Activated B cell treated with CpG ODN at 0.5 μM for 24 hours (primary cell): ENCODE measurements at regions of chr2 and their contacts with region 1.

Region 1: DNA sequence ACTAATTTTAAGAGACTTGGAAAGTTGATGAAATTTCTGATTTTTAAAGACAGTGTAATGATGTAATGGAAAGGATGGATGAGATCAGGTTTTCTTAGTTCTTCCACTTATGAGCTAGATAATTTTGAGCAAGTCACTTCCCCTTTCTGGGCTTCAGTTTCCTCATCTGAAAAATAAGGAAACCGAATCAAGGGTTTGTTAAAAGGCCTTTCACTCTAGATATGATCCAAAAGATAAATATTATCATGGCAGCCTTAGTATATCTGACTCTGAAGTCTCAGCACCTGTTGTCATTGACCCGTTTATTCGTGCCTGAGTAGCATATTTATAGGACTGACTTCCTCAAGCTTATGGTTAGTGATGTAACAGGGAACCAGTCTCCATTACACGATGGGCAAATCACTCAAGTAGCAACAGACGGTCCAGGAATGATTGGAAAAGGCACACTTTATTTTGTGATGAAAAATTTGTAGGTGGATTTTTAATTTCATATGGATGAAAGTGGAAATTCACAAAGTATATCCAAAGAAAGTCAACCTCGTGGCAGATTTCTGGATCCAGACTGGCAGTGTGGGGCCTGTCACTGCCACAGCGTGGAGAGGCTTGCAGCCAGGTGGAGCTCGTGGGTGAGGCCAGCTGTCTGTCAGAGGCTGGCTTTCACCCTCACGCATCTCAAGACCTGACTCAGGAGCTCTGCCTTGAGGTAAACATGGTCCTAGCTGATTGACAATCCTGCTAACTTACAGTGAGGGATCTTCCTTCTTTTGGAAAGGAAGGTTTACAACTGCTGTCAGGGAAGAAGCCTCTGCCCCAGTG is 137.9 kb upstream of the CXCR4 start:
- DNase-seq: no peak
- ATAC-seq: peak; percentile 63
- H3K4me3 Mint-ChIP-seq: peak overlapping the region; percentile 55
- H3K27ac Mint-ChIP-seq: peak overlapping the region; percentile 92
- H3K4me1 Mint-ChIP-seq: peaks cover 86% of the 10 kb centered on the region
- H3K27me3 Mint-ChIP-seq: no peaks in the 10 kb centered on the region
- CTCF ChIP-seq: no peak

Region 2: GRCh38 chr2:135913727-135914365 is 342.0 kb before region 1 on chr2:
- CTCF ChIA-PET with region 1: interaction called, 4 read pairs
- POLR2A ChIA-PET with region 1: no interaction called
- intact Hi-C with region 1: loop called (anchors 5 kb)
- DNase-seq: no peak
- ATAC-seq: peak; percentile 64
- H3K4me3 Mint-ChIP-seq: no peak overlapping the region
- H3K27ac Mint-ChIP-seq: no peak overlapping the region
- H3K4me1 Mint-ChIP-seq: peaks cover 6% of the 10 kb centered on the region
- H3K27me3 Mint-ChIP-seq: no peaks in the 10 kb centered on the region
- CTCF ChIP-seq: peak; percentile 87

Region 3: GRCh38 chr2:136059036-136059472 is 196.8 kb before region 1 on chr2:
- CTCF ChIA-PET with region 1: no interaction called
- POLR2A ChIA-PET with region 1: interaction called, 3 read pairs
- intact Hi-C with region 1: loop called (anchors 2 kb)
- DNase-seq: no peak
- ATAC-seq: peak; percentile 63
- H3K4me3 Mint-ChIP-seq: peak overlapping the region; percentile 62
- H3K27ac Mint-ChIP-seq: peak overlapping the region; percentile 77
- H3K4me1 Mint-ChIP-seq: peaks cover 76% of the 10 kb centered on the region
- H3K27me3 Mint-ChIP-seq: no peaks in the 10 kb centered on the region
- CTCF ChIP-seq: no peak

Region 4: DNA sequence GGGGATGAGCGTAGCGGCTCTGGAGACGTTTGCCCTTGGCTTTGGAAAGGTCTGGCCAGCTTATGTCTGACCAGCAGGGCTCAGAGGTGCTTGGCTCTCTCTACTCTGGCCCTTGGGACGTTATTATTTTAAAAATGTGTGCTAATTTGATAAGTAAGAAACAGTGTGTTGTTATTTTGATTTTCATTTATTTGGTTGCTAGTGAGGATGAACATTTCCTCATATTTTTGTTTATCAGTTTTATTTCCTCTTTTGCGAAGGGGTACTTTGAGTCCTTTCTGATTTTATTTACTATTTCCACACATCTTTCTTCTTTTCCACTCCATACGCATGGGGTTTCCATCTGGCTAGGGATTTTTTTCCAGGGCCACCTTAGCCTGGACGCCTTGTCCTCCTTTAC is 149.4 kb before region 1 on chr2:
- CTCF ChIA-PET with region 1: no interaction called
- POLR2A ChIA-PET with region 1: no interaction called
- intact Hi-C with region 1: no loop called
- DNase-seq: no peak
- ATAC-seq: no peak
- H3K4me3 Mint-ChIP-seq: no peak overlapping the region
- H3K27ac Mint-ChIP-seq: peak overlapping the region; percentile 13
- H3K4me1 Mint-ChIP-seq: peaks cover 52% of the 10 kb centered on the region
- H3K27me3 Mint-ChIP-seq: no peaks in the 10 kb centered on the region
- CTCF ChIP-seq: no peak

Region 5: DNA sequence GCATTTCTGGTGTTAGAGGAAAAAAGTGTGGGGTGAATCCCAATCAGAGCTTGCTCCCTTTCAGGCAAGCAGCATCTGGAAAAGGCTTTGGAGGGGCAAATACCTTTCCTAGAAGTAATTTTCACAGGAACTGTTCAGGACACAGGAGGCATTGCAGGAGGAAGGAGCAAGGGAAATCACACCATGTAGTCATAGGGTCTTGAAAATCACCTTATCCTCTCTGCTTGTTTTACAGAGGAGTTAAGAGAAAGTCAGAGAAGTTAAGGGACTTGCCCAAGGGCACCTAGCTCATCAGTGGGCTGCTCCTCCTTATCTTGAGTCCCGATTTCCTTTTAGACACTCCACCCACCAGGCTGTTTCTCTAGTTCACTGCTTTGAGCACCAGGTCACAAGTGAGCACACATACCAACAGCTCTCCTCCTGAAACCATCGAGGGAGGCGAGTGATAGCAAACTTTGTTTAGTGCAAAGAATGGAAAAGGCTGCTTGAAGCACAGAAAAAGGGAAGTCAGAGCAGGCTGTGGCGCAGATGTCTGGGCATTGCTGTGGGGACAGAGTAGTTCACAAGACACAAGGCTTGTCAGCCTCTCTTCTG is 48.7 kb before region 1 on chr2:
- CTCF ChIA-PET with region 1: interaction called, 10 read pairs
- POLR2A ChIA-PET with region 1: interaction called, 103 read pairs
- intact Hi-C with region 1: loop called (anchors 1 kb)
- DNase-seq: peak; percentile 57
- ATAC-seq: peak; percentile 66
- H3K4me3 Mint-ChIP-seq: peak overlapping the region; percentile 71
- H3K27ac Mint-ChIP-seq: peak overlapping the region; percentile 97
- H3K4me1 Mint-ChIP-seq: peaks cover 78% of the 10 kb centered on the region
- H3K27me3 Mint-ChIP-seq: no peaks in the 10 kb centered on the region
- CTCF ChIP-seq: no peak

Region 6: GRCh38 chr2:136238286-136239078 is 17.4 kb before region 1 on chr2:
- CTCF ChIA-PET with region 1: interaction called, 51 read pairs
- POLR2A ChIA-PET with region 1: interaction called, 107 read pairs
- intact Hi-C with region 1: loop called (anchors 1 kb)
- DNase-seq: peak; percentile 38
- ATAC-seq: peak; percentile 77
- H3K4me3 Mint-ChIP-seq: peak overlapping the region; percentile 24
- H3K27ac Mint-ChIP-seq: peak overlapping the region; percentile 92
- H3K4me1 Mint-ChIP-seq: peaks cover 91% of the 10 kb centered on the region
- H3K27me3 Mint-ChIP-seq: no peaks in the 10 kb centered on the region
- CTCF ChIP-seq: no peak

Region 7: GRCh38 chr2:136327162-136327852 is 71.5 kb after region 1 on chr2:
- CTCF ChIA-PET with region 1: no interaction called
- POLR2A ChIA-PET with region 1: interaction called, 11 read pairs
- intact Hi-C with region 1: loop called (anchors 5 kb)
- DNase-seq: no peak
- ATAC-seq: peak; percentile 78
- H3K4me3 Mint-ChIP-seq: peak overlapping the region; percentile 60
- H3K27ac Mint-ChIP-seq: peak overlapping the region; percentile 85
- H3K4me1 Mint-ChIP-seq: peaks cover 56% of the 10 kb centered on the region
- H3K27me3 Mint-ChIP-seq: no peaks in the 10 kb centered on the region
- CTCF ChIP-seq: no peak